Heart left ventricle (tissue), 16 donors: ENCODE measurements at regions of chr1 and their contacts with region 1.

Region 1: DNA sequence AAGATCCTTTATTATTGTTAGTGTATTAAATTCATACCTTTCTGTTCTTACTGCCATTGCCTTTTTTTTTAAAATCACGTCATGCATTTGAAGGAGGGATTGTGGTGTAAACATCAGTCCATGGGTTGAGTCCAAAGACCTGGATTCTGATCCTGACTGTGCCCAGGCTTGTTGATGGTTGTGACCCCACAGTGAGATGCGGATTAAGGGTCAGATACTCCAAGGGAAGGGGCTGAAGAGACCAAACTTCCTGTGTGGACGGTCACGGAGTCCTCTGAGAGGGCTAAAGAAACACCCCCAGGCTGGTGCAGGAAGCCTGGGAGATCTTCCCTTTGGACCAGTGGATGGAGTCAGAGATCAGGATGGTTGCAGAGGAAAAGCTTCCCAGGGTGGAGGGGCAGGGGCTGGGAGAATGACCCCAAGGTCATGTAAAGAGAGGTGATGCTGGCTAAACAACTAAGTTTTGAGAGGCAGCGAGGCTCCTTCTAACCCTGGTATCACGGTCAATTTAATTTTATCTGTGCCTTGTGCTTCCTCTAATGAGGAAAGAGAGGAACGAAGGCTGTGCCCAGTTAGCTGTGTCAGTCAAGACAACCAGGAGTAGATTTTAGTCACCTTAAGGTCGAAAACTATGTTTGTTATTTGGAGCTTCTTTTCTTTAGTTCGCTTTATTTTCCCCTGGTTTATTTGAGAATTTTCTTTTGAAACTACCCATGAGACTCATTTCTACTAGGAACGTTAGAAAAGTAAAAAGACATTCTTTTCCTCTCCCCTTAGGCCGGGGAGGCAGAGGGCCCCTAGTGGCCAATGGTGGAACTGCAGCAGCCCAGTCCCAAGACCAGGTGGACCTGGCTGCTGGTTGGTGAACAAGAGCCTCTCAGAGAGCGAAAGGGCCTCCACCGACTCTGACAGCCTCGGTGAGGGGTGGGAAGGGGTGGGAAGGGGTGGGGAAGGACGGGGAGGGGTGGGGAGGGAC is 8.7 kb upstream of the GPR161 start:
- DNase-seq: peak; percentile 81 to 94 (median 83)
- ATAC-seq: peak; percentile 87 to 95 (median 92)
- H3K4me3 ChIP-seq: peak overlapping the region in 1 of 12 donors; percentile 18
- H3K27ac ChIP-seq: no peak overlapping the region
- H3K4me1 ChIP-seq: peaks cover 0 to 6% (median 0%) of the 10 kb centered on the region in 12 donors
- H3K27me3 ChIP-seq: no peaks in the 10 kb centered on the region
- CTCF ChIP-seq: peak; percentile 85 to 98 (median 94)
- POLR2A ChIP-seq: no peak

Region 2: GRCh38 chr1:168092566-168093355 is 52.7 kb before region 1 on chr1:
- intact Hi-C with region 1: loop called in 2 of 10 experiments (anchors 5 to 10 kb)
- DNase-seq: no peak
- ATAC-seq: peak in 1 of 4 donors; percentile 45
- H3K4me3 ChIP-seq: no peak overlapping the region
- H3K27ac ChIP-seq: no peak overlapping the region
- H3K4me1 ChIP-seq: peaks cover 0 to 7% (median 0%) of the 10 kb centered on the region in 12 donors
- H3K27me3 ChIP-seq: no peaks in the 10 kb centered on the region
- CTCF ChIP-seq: peak in 8 of 12 donors; percentile 8 to 44 (median 26)
- POLR2A ChIP-seq: no peak

Region 3: DNA sequence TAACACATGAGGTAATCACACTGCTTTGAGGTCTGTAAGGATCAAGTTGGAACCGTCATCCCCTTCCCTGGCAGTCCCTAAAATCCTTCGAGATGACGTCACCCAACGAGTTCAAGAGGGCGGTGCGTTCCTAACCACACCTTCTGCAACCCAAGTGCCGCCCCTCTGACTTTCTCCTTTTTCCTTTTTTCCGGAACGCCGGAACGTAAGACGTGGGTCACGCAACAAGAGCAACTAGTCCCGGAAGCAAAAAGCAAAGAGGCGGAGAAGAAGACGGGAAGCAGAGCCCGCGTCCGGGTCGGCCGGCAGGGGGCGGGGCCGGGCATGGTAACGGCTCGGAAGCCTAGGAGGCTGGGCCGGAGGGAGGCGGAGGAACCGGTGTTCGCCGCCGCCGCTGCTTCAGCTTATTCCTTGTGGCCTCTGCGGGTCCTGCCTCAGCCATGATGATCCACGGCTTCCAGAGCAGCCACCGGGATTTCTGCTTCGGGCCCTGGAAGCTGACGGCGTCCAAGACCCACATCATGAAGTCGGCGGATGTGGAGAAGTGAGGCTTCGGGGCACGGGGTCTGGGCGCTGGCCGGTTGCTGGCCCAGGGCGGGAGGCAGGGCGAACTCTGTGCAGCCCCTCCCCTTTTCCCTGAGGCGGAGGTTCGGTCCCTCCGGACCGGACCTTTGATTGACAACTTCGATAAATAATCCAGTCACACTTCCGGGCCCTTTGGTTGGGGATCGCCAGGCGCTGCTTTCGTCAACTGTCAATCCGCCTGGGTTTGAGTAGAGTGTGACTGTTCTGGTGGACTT is 33.4 kb after region 1 on chr1 and contains the start of gene TIPRL:
- intact Hi-C with region 1: loop called in 1 of 10 experiments (anchors 5 kb)
- DNase-seq: peak; percentile 96 to 97 (median 97)
- ATAC-seq: peak; percentile 94 to 99 (median 98)
- H3K4me3 ChIP-seq: peak within 1 kb of the TSS; percentile 74 to 88 (median 82)
- H3K27ac ChIP-seq: peak within 1 kb of the TSS; percentile 80 to 97 (median 92)
- H3K4me1 ChIP-seq: peaks cover 0 to 19% (median 10%) of the 10 kb centered on the region in 12 donors
- H3K27me3 ChIP-seq: peaks cover 0 to 2% (median 0%) of the 10 kb centered on the region in 9 donors
- CTCF ChIP-seq: peak; percentile 54 to 85 (median 72)
- POLR2A ChIP-seq: peak in 1 of 2 donors; percentile 86
- total RNA-seq, gene TIPRL: 26.9 to 39.4 (median 33.0) TPM